Breast epithelium (tissue), 4 donors: ENCODE measurements at regions of chr4 and their contacts with region 1.

Region 1: GRCh38 chr4:64870558-64870957 is 461.3 kb upstream of the TECRL start:
- DNase-seq: no peak
- H3K4me3 ChIP-seq: no peak overlapping the region
- H3K27ac ChIP-seq: no peak overlapping the region
- H3K4me1 ChIP-seq: no peaks in the 10 kb centered on the region
- H3K27me3 ChIP-seq: no peaks in the 10 kb centered on the region
- CTCF ChIP-seq: no peak
- POLR2A ChIP-seq: no peak

Region 2: DNA sequence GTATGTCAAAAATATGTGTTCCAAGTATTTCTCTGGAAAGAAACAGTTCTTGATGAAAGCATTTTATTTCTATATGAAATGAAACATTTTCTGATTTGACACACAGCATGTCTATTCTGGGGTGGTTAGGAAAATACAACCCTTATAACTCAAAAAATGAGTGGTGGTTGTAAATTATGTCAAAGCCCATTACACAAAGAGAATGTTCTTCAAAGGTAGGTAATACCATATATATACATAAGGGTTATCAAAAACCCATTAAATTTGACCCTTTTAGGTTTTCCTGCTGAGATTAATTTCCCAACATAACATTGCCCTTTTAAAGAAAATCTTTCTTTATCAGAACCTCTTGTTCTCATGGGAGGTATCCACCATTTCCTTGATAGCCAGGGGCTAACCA is 40.8 kb before region 1 on chr4:
- intact Hi-C with region 1: loop called (anchors 5 kb)
- DNase-seq: no peak
- H3K4me3 ChIP-seq: no peak overlapping the region
- H3K27ac ChIP-seq: no peak overlapping the region
- H3K4me1 ChIP-seq: no peaks in the 10 kb centered on the region
- H3K27me3 ChIP-seq: no peaks in the 10 kb centered on the region
- CTCF ChIP-seq: no peak
- POLR2A ChIP-seq: no peak

Region 3: GRCh38 chr4:64846417-64846816 is 24.1 kb before region 1 on chr4:
- intact Hi-C with region 1: no loop called
- DNase-seq: no peak
- H3K4me3 ChIP-seq: no peak overlapping the region
- H3K27ac ChIP-seq: no peak overlapping the region
- H3K4me1 ChIP-seq: no peaks in the 10 kb centered on the region
- H3K27me3 ChIP-seq: no peaks in the 10 kb centered on the region
- CTCF ChIP-seq: no peak
- POLR2A ChIP-seq: no peak

Region 4: GRCh38 chr4:65367306-65367705 is 496.7 kb after region 1 on chr4:
- intact Hi-C with region 1: no loop called
- DNase-seq: no peak
- H3K4me3 ChIP-seq: no peak overlapping the region
- H3K27ac ChIP-seq: no peak overlapping the region
- H3K4me1 ChIP-seq: no peaks in the 10 kb centered on the region
- H3K27me3 ChIP-seq: no peaks in the 10 kb centered on the region
- CTCF ChIP-seq: no peak
- POLR2A ChIP-seq: no peak